ENCODE measurements at regions of chr17 and their contacts with region 1.

Region 1: DNA sequence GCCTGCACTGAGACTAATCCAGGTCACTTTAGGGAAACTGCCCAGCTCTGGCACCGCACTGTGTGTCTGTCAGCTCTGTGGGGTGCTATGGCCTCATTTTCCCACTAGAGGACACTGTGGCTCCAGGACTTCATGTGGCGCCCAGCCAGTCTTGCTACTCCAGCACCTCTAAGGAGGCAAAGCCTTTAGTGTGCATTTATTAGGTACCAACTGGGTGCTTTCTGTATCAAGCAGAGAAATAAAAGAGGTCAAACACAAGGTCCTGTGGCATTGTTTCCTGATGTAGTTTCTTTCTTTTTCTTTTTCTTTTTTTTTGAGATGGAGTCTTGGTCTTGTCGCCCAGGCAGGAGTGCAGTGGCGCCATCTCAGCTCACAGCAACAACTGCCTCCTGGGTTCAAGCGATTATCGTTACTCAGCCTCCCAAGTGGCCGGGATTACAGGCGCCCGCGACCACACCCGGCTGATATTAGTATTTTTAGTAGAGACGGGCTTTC is 12.5 kb upstream of the RHBDL3 start:
- DNase-seq: peak; percentile 90
- ATAC-seq: peak; percentile 99
- H3K4me3 Mint-ChIP-seq: no peak overlapping the region
- H3K27ac Mint-ChIP-seq: no peak overlapping the region
- H3K4me1 Mint-ChIP-seq: peaks cover 11% of the 10 kb centered on the region
- H3K27me3 Mint-ChIP-seq: no peaks in the 10 kb centered on the region
- CTCF ChIP-seq: peak; percentile 96

Region 2: DNA sequence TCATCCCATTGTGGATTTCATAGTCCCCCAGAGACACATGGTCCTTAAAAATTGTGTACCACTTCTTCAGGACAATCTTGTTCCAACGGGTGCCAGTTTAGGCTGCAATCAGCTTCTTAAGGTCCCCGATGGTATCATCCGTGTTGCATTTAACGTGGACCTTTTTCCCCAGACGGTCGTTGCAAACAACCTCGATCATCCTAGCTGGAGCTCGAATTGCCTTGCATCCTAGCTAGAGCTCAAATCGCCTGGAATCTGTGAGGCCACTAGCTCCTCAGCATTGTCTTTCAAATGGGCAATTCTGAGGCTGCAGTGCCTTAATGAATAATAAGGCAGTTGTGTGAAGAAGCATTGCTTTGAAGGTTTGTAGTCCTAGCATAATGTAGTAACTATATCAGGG is 25.3 kb before region 1 on chr17:
- CTCF ChIA-PET with region 1: interaction called, 24 read pairs
- POLR2A ChIA-PET with region 1: interaction called, 6 read pairs
- DNase-seq: peak; percentile 34
- ATAC-seq: peak; percentile 90
- H3K4me3 Mint-ChIP-seq: peak overlapping the region; percentile 51
- H3K27ac Mint-ChIP-seq: peak overlapping the region; percentile 96
- H3K4me1 Mint-ChIP-seq: peaks cover 35% of the 10 kb centered on the region
- H3K27me3 Mint-ChIP-seq: no peaks in the 10 kb centered on the region
- CTCF ChIP-seq: no peak

Region 3: GRCh38 chr17:32265192-32265923 is 12.2 kb after region 1 on chr17 and contains the start of gene RHBDL3:
- CTCF ChIA-PET with region 1: interaction called, 10 read pairs
- POLR2A ChIA-PET with region 1: no interaction called
- DNase-seq: peak; percentile 36
- ATAC-seq: peak; percentile 31
- H3K4me3 Mint-ChIP-seq: peak within 1 kb of the TSS; percentile 78
- H3K27ac Mint-ChIP-seq: no peak within 1 kb of the TSS
- H3K4me1 Mint-ChIP-seq: peaks cover 40% of the 10 kb centered on the region
- H3K27me3 Mint-ChIP-seq: peaks cover 51% of the 10 kb centered on the region
- CTCF ChIP-seq: no peak
- total RNA-seq, gene RHBDL3: 11.3 to 13.2 TPM (median 11.6 TPM) in 3 replicates

Region 4: DNA sequence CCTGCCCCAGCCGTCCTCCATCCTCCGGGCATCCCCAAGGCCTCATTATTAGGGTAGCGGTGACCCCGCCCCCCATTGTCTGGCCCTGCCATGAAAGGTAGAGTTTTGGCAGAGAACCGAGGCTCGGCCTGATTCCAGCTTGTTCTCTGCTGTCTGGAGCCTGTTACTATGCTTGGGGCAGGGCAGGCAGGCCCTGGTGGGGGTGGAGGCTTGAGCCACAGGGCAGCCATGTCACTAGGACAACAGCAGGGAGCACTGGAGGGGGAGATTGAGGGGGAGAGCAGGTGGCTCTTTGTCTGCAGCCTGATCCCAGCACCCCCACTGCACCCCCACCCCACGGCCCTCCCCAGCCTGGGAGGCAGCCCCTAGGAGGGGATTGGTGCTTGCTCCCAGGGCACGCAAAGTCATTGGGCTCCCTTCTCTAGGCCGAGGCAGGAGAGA is 27.9 kb after region 1 on chr17:
- CTCF ChIA-PET with region 1: interaction called, 28 read pairs
- POLR2A ChIA-PET with region 1: interaction called, 3 read pairs
- DNase-seq: peak; percentile 67
- ATAC-seq: peak; percentile 34
- H3K4me3 Mint-ChIP-seq: no peak overlapping the region
- H3K27ac Mint-ChIP-seq: no peak overlapping the region
- H3K4me1 Mint-ChIP-seq: peaks cover 51% of the 10 kb centered on the region
- H3K27me3 Mint-ChIP-seq: peaks cover 5% of the 10 kb centered on the region; the same call in 1 of the 2 replicates
- CTCF ChIP-seq: no peak

Region 5: DNA sequence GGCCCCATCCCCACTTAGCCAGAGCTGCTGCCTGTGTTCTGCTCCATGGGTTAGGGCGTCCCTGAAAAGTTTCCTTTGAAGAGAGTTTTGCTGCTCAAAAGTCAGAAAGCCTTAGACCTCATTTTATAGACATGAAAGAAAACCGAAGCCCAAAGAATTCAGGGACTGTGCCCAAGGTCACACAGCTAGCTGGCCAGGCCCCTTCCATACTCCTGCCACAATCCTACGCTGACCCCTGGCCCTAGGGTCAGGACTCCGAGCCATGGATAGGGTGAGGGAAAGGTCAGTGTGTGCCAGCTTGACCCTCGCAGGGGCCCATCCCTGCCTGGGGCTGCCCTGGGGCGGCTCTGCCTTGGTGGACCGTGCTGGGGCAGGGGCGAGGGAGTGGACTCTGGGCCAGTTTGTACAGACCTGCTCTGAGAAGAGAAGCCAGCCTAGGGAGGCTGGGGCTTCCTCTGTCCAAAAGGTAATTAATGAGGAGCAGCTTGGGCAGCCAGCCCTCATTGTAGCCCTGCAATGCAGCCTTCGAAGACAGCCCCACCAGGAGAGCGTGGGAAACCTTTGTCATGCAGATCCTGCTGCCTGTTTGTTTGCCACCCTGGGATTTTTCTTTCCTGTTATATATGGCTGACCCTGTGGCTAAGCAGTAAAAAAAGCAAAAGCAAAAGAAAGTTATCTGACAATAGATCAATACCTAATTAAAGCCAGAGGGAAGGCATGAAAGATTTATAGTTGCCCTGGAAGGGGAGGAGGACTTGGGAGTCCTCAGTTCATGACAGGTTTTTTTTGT is 49.9 kb after region 1 on chr17:
- CTCF ChIA-PET with region 1: interaction called, 17 read pairs
- POLR2A ChIA-PET with region 1: no interaction called
- DNase-seq: peak; percentile 79
- ATAC-seq: peak; percentile 82
- H3K4me3 Mint-ChIP-seq: peak overlapping the region; percentile 16
- H3K27ac Mint-ChIP-seq: peak overlapping the region; percentile 96
- H3K4me1 Mint-ChIP-seq: peaks cover 59% of the 10 kb centered on the region
- H3K27me3 Mint-ChIP-seq: no peaks in the 10 kb centered on the region
- CTCF ChIP-seq: no peak

Region 6: DNA sequence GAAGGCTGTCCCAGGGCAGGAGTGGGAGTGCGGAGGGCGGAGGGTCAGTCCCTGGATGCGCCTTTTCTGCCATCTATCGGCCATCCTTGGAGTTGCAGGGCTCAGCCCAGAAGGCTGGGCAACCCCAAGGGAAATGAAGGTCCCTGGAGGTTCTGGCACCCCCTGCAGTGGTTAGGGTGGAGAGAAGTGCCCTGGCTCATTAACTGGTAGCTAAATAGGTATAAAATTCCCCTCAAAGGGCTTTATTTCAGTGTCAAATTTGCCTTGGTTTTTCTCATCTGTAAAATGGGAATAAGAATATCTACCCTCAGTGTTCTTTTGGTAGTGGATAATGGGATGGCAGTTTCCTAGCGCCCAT is 66.4 kb after region 1 on chr17:
- CTCF ChIA-PET with region 1: interaction called, 40 read pairs
- POLR2A ChIA-PET with region 1: interaction called, 5 read pairs
- DNase-seq: peak; percentile 93
- ATAC-seq: peak; percentile 86
- H3K4me3 Mint-ChIP-seq: no peak overlapping the region
- H3K27ac Mint-ChIP-seq: no peak overlapping the region
- H3K4me1 Mint-ChIP-seq: peaks cover 35% of the 10 kb centered on the region
- H3K27me3 Mint-ChIP-seq: no peaks in the 10 kb centered on the region
- CTCF ChIP-seq: peak; percentile 94

Measured in WTC11 (cell line).